ENCODE measurements at regions of chr1 and their contacts with region 1.

Region 1: GRCh38 chr1:38064232-38064903 is 17.8 kb upstream of the POU3F1 start:
- DNase-seq: no peak
- CTCF ChIP-seq: no peak

Region 2: DNA sequence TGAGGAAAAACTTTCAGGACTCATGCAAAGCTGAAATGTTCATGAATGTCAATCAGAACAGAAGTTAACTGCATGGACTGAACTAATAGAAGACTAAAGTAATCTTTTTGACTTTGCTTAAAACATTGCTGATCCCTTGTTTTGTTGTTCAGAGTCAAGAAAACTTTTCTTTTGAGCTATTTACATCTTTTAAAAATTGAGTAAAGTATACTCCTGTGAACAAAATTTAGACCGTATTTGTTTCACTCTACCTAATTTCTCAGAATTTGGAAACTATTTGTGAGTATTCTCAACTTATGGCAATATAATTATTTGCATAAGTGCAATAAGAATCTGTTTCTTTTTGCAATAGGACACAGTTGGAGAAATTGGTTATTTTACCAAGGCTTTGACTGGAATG is 158.6 kb before region 1 on chr1:
- CTCF ChIA-PET with region 1: no interaction called
- POLR2A ChIA-PET with region 1: no interaction called
- DNase-seq: no peak
- CTCF ChIP-seq: no peak

Region 3: DNA sequence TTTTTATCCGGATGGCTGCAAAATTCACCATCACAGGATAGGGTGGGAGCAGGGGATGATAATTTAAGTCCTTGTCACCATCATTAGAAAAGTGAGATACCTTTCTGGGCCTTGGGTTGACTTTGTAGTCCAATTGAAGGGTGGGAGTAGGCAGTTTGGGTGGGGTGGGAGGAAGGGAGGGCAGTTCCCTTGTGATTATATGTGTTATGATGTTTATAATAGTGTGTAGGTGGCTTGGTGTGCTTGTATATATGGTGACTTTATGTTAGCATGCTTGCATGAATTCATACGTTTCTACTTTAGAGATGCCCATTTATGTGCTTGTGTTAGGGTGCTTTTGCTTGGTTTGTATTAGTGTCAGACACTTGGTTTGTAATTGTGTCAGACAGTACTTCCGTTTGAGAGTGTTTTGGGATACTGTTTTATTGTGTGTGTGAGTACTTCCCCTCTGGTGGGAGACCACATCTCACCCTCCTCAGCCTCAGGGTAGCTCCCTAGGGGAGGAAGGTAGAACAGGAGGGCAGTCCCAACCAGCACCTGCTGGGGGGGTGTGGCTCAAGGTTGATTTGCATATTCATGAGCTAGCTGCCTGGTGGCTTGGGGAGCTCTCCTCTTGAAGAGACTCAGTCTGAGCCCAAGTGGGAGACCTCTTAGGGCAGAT is 11.5 kb before region 1 on chr1:
- CTCF ChIA-PET with region 1: interaction called, 68 read pairs
- POLR2A ChIA-PET with region 1: no interaction called
- DNase-seq: peak; percentile 52
- CTCF ChIP-seq: no peak